Activated CD8-positive, alpha-beta T cell treated with anti-CD3 and anti-CD28 coated beads for 36 hours (primary cell): ENCODE measurements at regions of chr18 and their contacts with region 1.

Region 1: DNA sequence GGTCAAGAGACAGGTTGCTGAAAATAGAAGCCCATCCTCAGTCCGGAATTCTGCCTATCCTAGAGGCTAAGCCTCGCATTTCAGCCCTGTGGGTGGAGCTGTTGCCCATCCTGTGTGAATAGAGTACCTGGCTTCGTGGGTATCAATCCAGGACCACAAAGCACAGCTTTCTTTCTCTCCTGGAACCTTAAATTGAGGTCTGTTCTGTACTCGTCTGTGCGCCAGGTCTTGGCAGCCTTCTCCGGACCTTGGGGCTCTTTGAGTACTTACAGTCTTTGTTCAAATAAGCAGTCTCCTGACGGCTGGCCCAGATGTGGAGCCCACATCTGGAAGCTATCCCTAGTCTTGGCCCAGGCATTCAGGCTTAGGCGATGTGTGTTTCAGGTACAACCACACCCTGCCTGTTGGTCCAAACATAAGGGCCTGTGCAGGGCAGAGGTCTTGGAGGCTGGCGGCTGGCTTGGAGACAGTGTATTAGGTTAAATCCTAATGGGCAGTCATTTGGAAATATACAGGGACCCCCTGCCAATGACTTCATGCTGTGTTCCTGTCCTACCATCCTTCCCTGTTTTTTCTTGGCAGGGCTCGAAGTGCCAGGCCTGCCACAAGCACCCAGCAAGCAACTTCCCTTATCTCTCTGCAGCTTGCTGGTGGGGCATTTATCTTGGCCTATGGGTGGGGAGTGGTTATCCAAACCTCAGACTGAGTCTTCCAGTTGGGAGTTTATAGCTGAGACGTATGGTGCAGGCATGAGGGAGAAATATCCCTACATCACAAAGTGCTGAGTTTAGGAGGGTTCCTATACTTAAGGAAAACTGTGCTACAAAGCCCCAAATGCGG is 294.1 kb downstream of the BCL2 start:
- DNase-seq: peak; percentile 18
- ATAC-seq: no peak
- H3K4me3 Mint-ChIP-seq: no peak overlapping the region
- H3K27ac Mint-ChIP-seq: no peak overlapping the region
- H3K4me1 Mint-ChIP-seq: no peaks in the 10 kb centered on the region
- H3K27me3 Mint-ChIP-seq: no peaks in the 10 kb centered on the region
- CTCF ChIP-seq: no peak

Region 2: GRCh38 chr18:62904396-62905285 is 120.8 kb before region 1 on chr18:
- CTCF ChIA-PET with region 1: no interaction called
- POLR2A ChIA-PET with region 1: no interaction called
- intact Hi-C with region 1: no loop called
- DNase-seq: no peak
- ATAC-seq: no peak
- H3K4me3 Mint-ChIP-seq: no peak overlapping the region
- H3K27ac Mint-ChIP-seq: no peak overlapping the region
- H3K4me1 Mint-ChIP-seq: no peaks in the 10 kb centered on the region
- H3K27me3 Mint-ChIP-seq: no peaks in the 10 kb centered on the region
- CTCF ChIP-seq: no peak

Region 3: GRCh38 chr18:63325086-63325686 is 299.7 kb after region 1 on chr18:
- CTCF ChIA-PET with region 1: interaction called, 15 read pairs
- POLR2A ChIA-PET with region 1: no interaction called
- intact Hi-C with region 1: no loop called
- DNase-seq: no peak
- ATAC-seq: no peak
- H3K4me3 Mint-ChIP-seq: no peak overlapping the region
- H3K27ac Mint-ChIP-seq: no peak overlapping the region
- H3K4me1 Mint-ChIP-seq: peaks cover 19% of the 10 kb centered on the region
- H3K27me3 Mint-ChIP-seq: no peaks in the 10 kb centered on the region
- CTCF ChIP-seq: no peak